ENCODE measurements at regions of chr12 and their contacts with region 1.

Region 1: DNA sequence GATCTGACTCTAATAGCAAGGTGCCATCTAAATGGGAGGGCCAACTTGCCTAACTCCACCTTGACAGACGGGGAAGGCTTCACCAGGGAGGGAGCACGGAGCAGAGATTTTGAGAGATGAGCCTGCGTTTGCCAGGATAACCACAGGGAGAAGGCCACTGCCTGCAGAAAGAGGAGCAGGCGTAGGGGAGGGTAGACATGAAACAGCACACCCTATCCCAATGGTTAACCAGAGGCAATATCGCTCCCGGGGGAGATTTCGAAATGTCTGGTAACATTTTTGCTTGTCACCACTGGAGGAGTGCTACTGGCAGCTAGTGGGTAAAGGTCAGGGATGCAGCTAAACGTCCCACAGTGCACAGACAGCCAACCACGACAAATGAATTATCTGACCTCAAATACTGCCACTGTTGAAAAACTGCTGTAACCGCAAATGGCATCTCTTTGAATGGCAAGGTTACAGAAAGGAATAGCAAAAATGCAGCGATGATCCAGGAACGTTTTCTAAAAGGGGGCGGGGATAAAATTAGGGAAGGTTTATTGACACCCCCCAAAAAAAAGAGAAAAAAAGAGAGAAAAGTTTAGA is 126.0 kb upstream of the ATF7IP start:
- DNase-seq: peak; percentile 80
- ATAC-seq: peak; percentile 79
- H3K4me3 ChIP-seq: peak overlapping the region; percentile 26 to 53 (median 39)
- H3K4me3 Mint-ChIP-seq: peak overlapping the region; percentile 88
- H3K27ac ChIP-seq: peak overlapping the region; percentile 96 to 99
- H3K27ac Mint-ChIP-seq: peak overlapping the region; percentile 100
- H3K4me1 ChIP-seq: peaks cover 34 to 35% of the 10 kb centered on the region in 2 donors
- H3K4me1 Mint-ChIP-seq: peaks cover 35% of the 10 kb centered on the region
- H3K27me3 ChIP-seq: no peaks in the 10 kb centered on the region
- H3K27me3 Mint-ChIP-seq: no peaks in the 10 kb centered on the region
- CTCF ChIP-seq: no peak

Region 2: DNA sequence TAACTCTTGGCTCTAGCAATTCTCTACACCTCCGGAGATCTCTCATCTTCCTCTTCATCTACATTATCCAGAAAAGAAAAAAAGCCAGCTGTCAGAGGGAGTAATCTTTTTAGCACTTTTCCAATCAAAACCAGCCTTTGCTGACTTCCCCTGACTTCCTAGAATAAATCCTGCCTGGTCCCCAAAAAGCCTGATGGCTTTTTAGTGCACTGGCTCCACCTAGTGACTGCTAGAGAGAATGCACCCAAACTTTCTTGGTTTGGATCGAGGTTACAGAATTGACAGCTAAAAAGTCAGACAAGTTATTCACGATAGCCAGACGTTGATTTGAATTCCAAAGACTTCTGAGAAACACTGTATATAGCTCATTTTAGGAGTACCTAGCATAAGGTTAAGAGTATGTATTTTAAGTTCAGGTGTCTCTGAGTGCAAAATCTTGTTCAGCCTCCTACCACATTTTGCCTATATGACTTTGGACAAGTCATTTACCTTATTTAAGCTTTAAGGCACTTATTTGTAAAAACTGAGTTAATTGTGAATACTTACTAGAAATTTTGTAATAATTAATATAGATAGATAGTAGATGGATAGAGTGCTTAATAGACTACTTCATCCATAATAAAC is 72.3 kb before region 1 on chr12:
- CTCF ChIA-PET with region 1: interaction called, 6 read pairs
- POLR2A ChIA-PET with region 1: interaction called, 13 read pairs
- intact Hi-C with region 1: no loop called
- DNase-seq: peak; percentile 76
- ATAC-seq: peak; percentile 72
- H3K4me3 ChIP-seq: no peak overlapping the region
- H3K4me3 Mint-ChIP-seq: no peak overlapping the region
- H3K27ac ChIP-seq: no peak overlapping the region
- H3K27ac Mint-ChIP-seq: no peak overlapping the region
- H3K4me1 ChIP-seq: peaks cover 19 to 21% of the 10 kb centered on the region in 2 donors
- H3K4me1 Mint-ChIP-seq: peaks cover 25% of the 10 kb centered on the region
- H3K27me3 ChIP-seq: no peaks in the 10 kb centered on the region
- H3K27me3 Mint-ChIP-seq: no peaks in the 10 kb centered on the region
- CTCF ChIP-seq: peak; percentile 100

Region 3: DNA sequence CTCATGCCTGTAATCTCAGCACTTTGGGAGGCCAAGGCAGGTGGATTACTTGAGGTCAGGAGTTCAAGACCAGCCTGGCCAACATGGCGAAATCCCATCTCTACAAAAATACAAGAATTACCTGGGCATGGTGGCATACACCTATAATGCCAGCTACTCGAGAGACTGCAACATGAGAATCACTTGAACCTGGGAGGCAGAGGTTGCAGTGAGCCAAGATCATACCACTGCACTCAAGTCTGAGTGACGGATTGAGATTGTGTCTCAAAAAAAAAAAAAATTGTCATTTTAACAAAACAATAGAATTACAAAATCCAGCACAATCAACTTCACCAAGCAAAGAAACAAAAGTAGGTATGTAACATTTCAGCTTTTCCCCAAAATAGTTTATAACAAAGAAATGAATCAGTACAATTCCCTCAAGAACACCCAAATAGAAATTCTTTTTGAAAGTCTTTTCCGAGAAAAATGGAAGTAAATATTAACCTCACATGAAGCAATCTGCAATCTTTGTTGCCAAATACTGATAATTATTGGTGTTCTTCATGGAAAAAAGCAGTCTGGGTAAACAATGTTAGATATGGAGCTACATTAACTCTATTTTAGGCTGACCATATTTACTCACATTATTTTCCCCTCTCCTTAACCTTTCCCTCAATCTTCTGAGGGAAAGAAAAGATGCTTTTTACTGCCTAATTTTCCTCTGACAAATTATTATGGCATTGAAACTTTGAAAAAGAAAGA is 39.8 kb before region 1 on chr12:
- CTCF ChIA-PET with region 1: no interaction called
- POLR2A ChIA-PET with region 1: no interaction called
- intact Hi-C with region 1: no loop called
- DNase-seq: no peak
- ATAC-seq: no peak
- H3K4me3 ChIP-seq: no peak overlapping the region
- H3K4me3 Mint-ChIP-seq: no peak overlapping the region
- H3K27ac ChIP-seq: no peak overlapping the region
- H3K27ac Mint-ChIP-seq: no peak overlapping the region
- H3K4me1 ChIP-seq: no peaks in the 10 kb centered on the region
- H3K4me1 Mint-ChIP-seq: no peaks in the 10 kb centered on the region
- H3K27me3 ChIP-seq: no peaks in the 10 kb centered on the region
- H3K27me3 Mint-ChIP-seq: no peaks in the 10 kb centered on the region
- CTCF ChIP-seq: no peak

Region 4: GRCh38 chr12:14257734-14258574 is 18.5 kb after region 1 on chr12:
- CTCF ChIA-PET with region 1: interaction called, 51 read pairs
- POLR2A ChIA-PET with region 1: interaction called, 10 read pairs
- intact Hi-C with region 1: loop called (anchors 1 kb)
- DNase-seq: peak; percentile 81
- ATAC-seq: peak; percentile 64
- H3K4me3 ChIP-seq: peak overlapping the region in 3 of 5 experiments; percentile 1 to 52 (median 8)
- H3K4me3 Mint-ChIP-seq: peak overlapping the region; percentile 79
- H3K27ac ChIP-seq: peak overlapping the region; percentile 81 to 90
- H3K27ac Mint-ChIP-seq: peak overlapping the region; percentile 98
- H3K4me1 ChIP-seq: peaks cover 41 to 60% of the 10 kb centered on the region in 2 donors
- H3K4me1 Mint-ChIP-seq: peaks cover 62% of the 10 kb centered on the region
- H3K27me3 ChIP-seq: no peaks in the 10 kb centered on the region
- H3K27me3 Mint-ChIP-seq: no peaks in the 10 kb centered on the region
- CTCF ChIP-seq: no peak

Region 5: GRCh38 chr12:14394317-14395073 is 155.1 kb after region 1 on chr12:
- CTCF ChIA-PET with region 1: interaction called, 5 read pairs
- POLR2A ChIA-PET with region 1: no interaction called
- intact Hi-C with region 1: loop called (anchors 1 kb)
- DNase-seq: peak; percentile 71
- ATAC-seq: peak; percentile 69
- H3K4me3 ChIP-seq: peak overlapping the region in 4 of 5 experiments; percentile 0 to 55 (median 18)
- H3K4me3 Mint-ChIP-seq: peak overlapping the region; percentile 56
- H3K27ac ChIP-seq: peak overlapping the region; percentile 62 to 67
- H3K27ac Mint-ChIP-seq: peak overlapping the region; percentile 78
- H3K4me1 ChIP-seq: peaks cover 32 to 55% of the 10 kb centered on the region in 2 donors
- H3K4me1 Mint-ChIP-seq: peaks cover 69% of the 10 kb centered on the region
- H3K27me3 ChIP-seq: no peaks in the 10 kb centered on the region
- H3K27me3 Mint-ChIP-seq: no peaks in the 10 kb centered on the region
- CTCF ChIP-seq: no peak

Region 6: DNA sequence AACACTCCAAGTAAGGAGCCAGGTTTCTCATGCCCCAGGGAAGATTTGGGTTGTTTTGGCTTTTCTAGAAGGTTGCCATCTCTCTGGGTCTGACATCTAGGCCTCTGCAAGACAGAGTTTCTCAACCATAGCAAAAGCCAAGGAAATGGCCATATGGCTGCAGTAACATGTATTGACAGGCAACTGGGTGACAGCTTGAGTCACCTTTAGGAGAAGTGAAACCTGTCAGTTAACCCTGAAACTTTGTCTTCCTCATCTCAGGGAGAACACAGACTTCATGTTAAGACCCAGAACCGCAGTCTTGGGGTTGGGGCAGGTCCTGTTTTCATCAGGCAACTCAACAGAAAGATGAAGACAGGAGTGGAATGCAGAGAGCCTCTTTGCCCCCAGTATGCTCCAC is 374.3 kb after region 1 on chr12:
- CTCF ChIA-PET with region 1: interaction called, 33 read pairs
- POLR2A ChIA-PET with region 1: interaction called, 3 read pairs
- intact Hi-C with region 1: loop called (anchors 2 kb)
- DNase-seq: peak; percentile 88
- ATAC-seq: peak; percentile 82
- H3K4me3 ChIP-seq: peak overlapping the region in 3 of 5 experiments; percentile 23 to 60 (median 54)
- H3K4me3 Mint-ChIP-seq: peak overlapping the region; percentile 80
- H3K27ac ChIP-seq: peak overlapping the region; percentile 73 to 81
- H3K27ac Mint-ChIP-seq: peak overlapping the region; percentile 92
- H3K4me1 ChIP-seq: peaks cover 28 to 36% of the 10 kb centered on the region in 2 donors
- H3K4me1 Mint-ChIP-seq: peaks cover 34% of the 10 kb centered on the region
- H3K27me3 ChIP-seq: no peaks in the 10 kb centered on the region
- H3K27me3 Mint-ChIP-seq: no peaks in the 10 kb centered on the region
- CTCF ChIP-seq: no peak

Region 7: GRCh38 chr12:14769969-14770495 is 530.6 kb after region 1 on chr12:
- CTCF ChIA-PET with region 1: interaction called, 6 read pairs
- POLR2A ChIA-PET with region 1: no interaction called
- intact Hi-C with region 1: loop called (anchors 1 kb)
- DNase-seq: peak; percentile 97
- ATAC-seq: peak; percentile 57
- H3K4me3 ChIP-seq: peak overlapping the region; percentile 78 to 98 (median 93)
- H3K4me3 Mint-ChIP-seq: peak overlapping the region; percentile 97
- H3K27ac ChIP-seq: peak overlapping the region; percentile 94 to 96
- H3K27ac Mint-ChIP-seq: peak overlapping the region; percentile 97
- H3K4me1 ChIP-seq: peaks cover 28 to 45% of the 10 kb centered on the region in 2 donors
- H3K4me1 Mint-ChIP-seq: peaks cover 55% of the 10 kb centered on the region
- H3K27me3 ChIP-seq: no peaks in the 10 kb centered on the region
- H3K27me3 Mint-ChIP-seq: no peaks in the 10 kb centered on the region
- CTCF ChIP-seq: peak; percentile 86